ENCODE measurements at regions of chr17 and their contacts with region 1.

Region 1: DNA sequence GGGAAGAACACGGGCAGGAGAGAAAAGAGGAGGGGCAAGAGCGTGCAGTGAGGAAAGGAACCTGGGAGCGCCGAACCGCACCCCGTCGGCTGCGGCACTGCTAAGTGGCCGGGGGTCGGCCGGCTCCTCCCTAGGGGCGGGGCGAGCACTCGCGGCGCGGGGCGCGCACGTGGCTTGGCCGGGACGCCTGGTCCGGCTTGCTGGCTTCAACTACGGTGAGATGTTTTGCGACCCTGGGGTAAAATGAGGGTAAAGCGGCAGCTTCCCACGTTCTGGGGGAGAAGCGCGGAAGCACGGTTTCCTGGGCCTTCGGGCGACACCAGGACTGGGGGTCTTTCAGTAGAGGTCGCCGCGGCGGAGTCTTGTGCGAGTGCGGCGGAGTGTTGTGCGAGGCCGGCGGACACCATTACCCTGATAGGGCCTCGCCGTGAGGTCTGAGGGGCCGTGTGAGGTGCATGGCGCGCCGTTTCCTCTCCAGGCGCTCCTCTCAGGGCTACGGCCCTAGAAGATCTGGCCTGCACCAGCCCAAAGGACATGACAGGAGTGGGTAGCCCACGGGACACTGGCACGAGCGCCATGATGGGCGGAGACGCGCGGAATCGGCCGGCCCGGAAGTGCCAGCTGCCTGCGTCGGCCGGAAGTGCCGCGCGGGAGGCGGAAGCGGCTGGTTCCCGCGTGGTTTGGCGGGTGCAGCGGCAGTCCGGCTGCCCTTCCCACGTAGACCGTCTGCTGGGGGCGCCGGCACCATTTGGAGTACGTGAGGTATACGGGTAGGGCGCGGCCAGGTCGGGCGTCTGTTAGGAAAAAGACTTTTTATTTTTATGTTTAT is at the starts of genes MYO19 and PIGW:
- DNase-seq: peak; percentile 82
- ATAC-seq: peak; percentile 92
- H3K4me3 ChIP-seq: peak within 1 kb of the TSS; percentile 68 to 78 (median 76)
- H3K27ac ChIP-seq: peak within 1 kb of the TSS; percentile 98
- H3K4me1 ChIP-seq: peaks cover 38% of the 10 kb centered on the region
- H3K27me3 ChIP-seq: no peaks in the 10 kb centered on the region; a peak in 1 of 5 replicates
- CTCF ChIP-seq: peak; percentile 63
- EP300 ChIP-seq: no peak
- POLR2A ChIP-seq: peak; percentile 82 to 93
- RAD21 ChIP-seq: peak; percentile 20; the same call in 1 of the 2 replicates
- total RNA-seq, gene MYO19: 46.8 and 75.7 TPM in 2 replicates
- total RNA-seq, gene PIGW: 24.0 and 26.5 TPM in 2 replicates

Region 2: DNA sequence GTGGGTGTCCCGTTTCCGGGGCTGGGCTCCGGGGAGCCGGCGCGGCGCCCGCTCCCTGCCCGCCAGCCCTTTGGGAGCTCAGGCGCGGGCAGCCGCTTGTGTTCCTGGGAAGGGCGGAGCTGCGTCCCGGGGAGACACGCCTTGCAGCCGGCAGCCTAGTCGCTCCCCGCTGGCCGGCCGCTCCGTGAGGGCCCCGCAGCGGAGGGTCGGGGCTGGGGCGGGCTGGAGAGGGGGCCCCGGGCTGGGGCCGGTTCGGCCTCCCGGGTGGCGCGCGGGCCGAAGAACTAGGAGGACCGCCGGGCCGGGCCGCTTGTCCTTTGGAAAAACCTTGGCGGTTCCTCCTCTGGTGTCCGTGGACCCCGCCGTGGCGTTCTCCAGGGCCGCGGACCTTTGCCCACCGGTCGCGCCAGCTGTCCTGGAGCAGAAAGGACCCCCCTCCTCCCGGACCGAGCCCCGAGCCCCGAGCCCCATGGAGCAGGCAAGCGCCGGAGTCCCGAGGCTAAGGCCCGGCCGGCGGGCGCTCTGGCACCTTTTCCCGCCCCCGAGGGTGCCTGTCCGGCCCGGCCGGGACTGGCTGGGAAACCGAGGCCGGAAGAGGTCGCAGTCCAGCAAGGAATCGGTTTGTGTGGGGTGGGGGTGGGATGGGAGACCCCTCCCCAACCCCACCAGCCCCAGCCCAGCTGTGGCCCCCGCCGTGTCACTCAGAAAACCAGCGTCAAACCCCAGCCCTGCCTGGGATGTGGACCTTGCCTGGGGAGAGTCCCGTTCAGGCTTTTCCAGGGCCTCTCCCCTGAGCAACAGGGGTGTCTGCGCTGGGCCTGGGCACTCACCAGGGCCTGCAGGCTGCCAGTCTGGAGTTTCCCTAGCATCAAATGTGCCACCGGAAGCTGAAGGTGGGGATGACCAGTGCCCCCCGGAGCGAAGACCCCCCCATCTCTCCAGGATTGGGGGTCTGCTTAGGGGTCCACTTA is 351.8 kb before region 1 on chr17:
- CTCF ChIA-PET with region 1: no interaction called
- POLR2A ChIA-PET with region 1: no interaction called
- in situ Hi-C with region 1: no loop called
- intact Hi-C with region 1: no loop called
- DNase-seq: peak; percentile 37
- ATAC-seq: peak; percentile 91
- H3K4me3 ChIP-seq: peak overlapping the region; percentile 53 to 68 (median 54); a peak in 4 of 6 replicates
- H3K27ac ChIP-seq: no peak overlapping the region
- H3K4me1 ChIP-seq: 0 out of 2 replicates have a peak, but pooled peaks cover under 1% of the 10 kb centered on the region
- H3K27me3 ChIP-seq: peaks cover 22 to 48% of the 10 kb centered on the region in 2 experiments
- CTCF ChIP-seq: no peak
- EP300 ChIP-seq: no peak
- POLR2A ChIP-seq: no peak
- RAD21 ChIP-seq: no peak

Region 3: GRCh38 chr17:36503456-36504155 is 31.4 kb before region 1 on chr17:
- CTCF ChIA-PET with region 1: no interaction called
- POLR2A ChIA-PET with region 1: no interaction called
- in situ Hi-C with region 1: no loop called
- intact Hi-C with region 1: loop called (anchors 1 kb)
- DNase-seq: no peak
- ATAC-seq: no peak
- H3K4me3 ChIP-seq: no peak overlapping the region
- H3K27ac ChIP-seq: no peak overlapping the region
- H3K4me1 ChIP-seq: peaks cover 18% of the 10 kb centered on the region
- H3K27me3 ChIP-seq: no peaks in the 10 kb centered on the region
- CTCF ChIP-seq: no peak
- EP300 ChIP-seq: no peak
- POLR2A ChIP-seq: no peak
- RAD21 ChIP-seq: no peak

Region 4: DNA sequence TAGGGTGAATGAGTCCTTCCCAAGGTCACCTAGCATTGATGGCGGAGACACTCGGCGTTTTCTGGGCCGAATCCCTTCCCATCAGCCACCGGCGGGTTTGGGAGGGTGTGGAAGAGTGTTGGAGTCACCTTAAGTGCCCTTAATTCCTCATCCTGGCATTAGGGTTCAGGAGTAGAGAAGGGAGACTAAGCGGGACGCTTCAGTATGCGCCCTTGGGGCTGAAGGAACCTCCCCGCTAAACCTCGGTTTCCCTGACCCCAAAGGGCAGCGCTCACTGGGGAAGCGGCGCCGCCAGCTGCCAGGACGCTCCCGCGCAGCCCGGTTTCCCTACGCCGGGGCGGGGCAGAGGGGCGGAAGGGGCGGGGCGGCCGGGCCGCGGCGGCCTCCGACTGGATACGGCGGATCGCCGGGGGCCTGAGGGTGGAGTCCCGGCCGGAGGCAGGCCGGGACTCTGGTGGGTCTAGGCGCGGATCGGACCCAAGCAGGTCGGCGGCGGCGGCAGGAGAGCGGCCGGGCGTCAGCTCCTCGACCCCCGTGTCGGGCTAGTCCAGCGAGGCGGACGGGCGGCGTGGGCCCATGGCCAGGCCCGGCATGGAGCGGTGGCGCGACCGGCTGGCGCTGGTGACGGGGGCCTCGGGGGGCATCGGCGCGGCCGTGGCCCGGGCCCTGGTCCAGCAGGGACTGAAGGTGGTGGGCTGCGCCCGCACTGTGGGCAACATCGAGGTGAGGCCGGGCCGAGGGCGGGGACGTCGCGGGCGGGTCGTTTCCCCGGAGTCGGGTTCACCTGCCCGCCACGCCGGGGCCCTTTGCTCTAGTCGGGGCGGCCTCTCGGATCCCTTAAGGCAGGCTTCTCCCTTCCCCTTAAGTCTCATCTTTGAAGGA is 56.6 kb after region 1 on chr17 and contains the start of gene DHRS11:
- CTCF ChIA-PET with region 1: no interaction called
- POLR2A ChIA-PET with region 1: interaction called, 11 read pairs
- in situ Hi-C with region 1: no loop called
- intact Hi-C with region 1: no loop called
- DNase-seq: peak; percentile 59
- ATAC-seq: peak; percentile 93
- H3K4me3 ChIP-seq: peak within 1 kb of the TSS; percentile 80 to 96 (median 84)
- H3K27ac ChIP-seq: peak within 1 kb of the TSS; percentile 84
- H3K4me1 ChIP-seq: peaks cover 25% of the 10 kb centered on the region
- H3K27me3 ChIP-seq: no peaks in the 10 kb centered on the region; a peak in 1 of 5 replicates
- CTCF ChIP-seq: peak; percentile 49
- EP300 ChIP-seq: no peak
- POLR2A ChIP-seq: peak; percentile 51 to 75
- RAD21 ChIP-seq: 0 out of 2 replicates have a peak, but pooled peaks have one; percentile 37
- total RNA-seq, gene DHRS11: 19.6 and 28.4 TPM in 2 replicates